ENCODE measurements at regions of chr13 and their contacts with region 1.

Region 1: DNA sequence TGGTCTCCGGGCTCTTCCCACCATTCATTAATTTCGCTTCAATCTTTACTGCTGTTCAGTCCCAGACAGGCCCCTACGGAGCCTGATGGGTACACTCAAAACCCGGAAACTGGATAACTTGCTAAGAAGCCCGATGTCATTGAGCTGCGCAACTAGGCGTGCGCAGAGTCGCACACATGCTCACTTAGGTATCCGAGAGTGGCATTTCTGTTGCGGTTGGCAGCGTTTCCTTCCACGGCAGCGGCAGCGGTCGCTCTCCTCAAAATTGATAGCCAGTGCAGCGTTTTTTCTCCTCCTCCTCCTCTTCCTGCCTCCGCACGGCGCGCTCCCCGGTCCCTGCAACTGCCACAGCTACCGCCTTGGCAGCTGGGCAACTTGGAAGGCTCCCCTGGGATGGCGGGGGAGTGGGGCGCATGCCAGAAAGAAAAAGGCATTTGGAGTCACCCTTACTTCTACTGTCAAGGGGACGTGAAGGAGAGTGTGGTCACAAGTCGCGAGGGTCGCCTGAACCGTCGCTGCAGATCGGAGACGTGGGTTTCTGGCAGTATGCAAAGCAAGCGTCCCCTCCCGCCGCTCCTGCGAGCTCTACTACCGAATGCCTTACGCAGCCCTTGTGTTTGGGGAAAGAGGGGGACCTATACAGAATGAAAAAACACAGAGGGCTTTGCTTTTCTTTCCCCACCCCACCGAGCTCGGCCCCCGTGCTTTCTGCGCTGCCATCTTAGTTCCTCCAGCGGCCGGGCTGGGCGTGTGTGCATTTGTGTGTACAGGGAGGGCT is 2.4 kb upstream of the MYCBP2 start:
- DNase-seq: peak; percentile 79
- ATAC-seq: peak; percentile 65
- H3K4me3 Mint-ChIP-seq: peak overlapping the region; percentile 98
- H3K27ac Mint-ChIP-seq: peak overlapping the region; percentile 98
- H3K4me1 Mint-ChIP-seq: peaks cover 53% of the 10 kb centered on the region
- H3K27me3 Mint-ChIP-seq: no peaks in the 10 kb centered on the region
- CTCF ChIP-seq: no peak

Region 2: DNA sequence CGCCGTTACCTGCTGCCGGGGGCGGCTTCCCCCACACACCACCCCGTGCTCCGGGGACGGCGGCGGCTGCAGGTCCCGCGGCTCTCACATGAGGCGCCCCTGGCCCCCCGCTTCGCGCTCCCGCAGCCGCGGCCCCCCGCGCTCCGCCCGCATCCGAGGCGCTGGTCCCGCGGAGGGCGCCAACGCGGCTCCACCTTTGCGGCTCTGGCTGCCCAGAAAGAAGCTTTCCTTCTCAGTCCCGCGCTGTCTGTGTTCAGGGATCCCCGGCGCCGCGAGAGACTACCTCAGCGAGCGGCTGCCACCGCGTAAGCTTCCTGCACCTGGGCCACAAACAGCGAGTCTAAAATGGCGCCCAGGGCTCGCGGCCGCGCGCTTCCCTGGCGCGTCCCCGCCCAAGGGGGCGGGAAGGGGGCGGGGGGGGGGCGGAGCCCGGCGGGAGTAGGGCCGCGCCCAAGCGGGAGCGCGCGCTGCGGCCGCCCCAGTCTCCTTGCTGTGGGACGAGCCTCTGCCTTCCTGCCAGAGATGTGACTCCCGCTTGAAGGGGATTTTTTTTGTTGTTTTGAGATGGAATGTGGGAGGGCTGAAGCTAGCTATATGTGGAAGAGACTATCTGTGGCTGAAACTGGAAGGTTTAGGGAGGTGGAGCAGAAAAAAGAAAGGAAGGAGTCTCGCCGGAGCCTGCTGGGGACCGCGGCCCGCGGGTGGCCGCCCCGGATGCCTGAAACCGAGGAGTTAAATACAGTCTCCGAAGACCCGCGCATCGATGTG is 302.3 kb before region 1 on chr13 and contains the start of gene FBXL3:
- CTCF ChIA-PET with region 1: no interaction called
- POLR2A ChIA-PET with region 1: interaction called, 12 read pairs
- intact Hi-C with region 1: loop called (anchors 2 kb)
- DNase-seq: peak; percentile 73
- ATAC-seq: peak; percentile 59
- H3K4me3 Mint-ChIP-seq: peak within 1 kb of the TSS; percentile 98
- H3K27ac Mint-ChIP-seq: peak within 1 kb of the TSS; percentile 96
- H3K4me1 Mint-ChIP-seq: peaks cover 54% of the 10 kb centered on the region
- H3K27me3 Mint-ChIP-seq: no peaks in the 10 kb centered on the region
- CTCF ChIP-seq: no peak
- total RNA-seq, gene FBXL3: 46.2 and 49.8 TPM in 2 replicates

Region 3: DNA sequence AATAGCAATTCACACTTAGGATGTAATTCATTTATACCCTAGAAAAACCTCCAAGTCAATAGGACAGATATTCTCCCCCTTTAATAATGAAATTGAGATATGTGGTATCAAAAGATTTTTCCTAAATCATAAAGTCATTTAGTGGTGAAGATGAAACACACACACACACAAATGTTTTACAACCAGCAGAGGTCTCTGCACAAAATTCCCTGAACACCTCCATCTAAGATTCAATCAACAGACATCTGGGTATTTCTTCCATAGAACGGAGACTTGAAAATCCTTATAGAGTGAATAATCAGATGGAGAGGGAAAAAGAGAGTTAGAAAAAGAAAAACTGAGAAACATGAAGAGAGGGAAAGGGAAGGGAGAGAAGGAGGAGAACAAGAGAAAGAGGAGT is 55.2 kb before region 1 on chr13:
- CTCF ChIA-PET with region 1: interaction called, 5 read pairs
- POLR2A ChIA-PET with region 1: interaction called, 3 read pairs
- intact Hi-C with region 1: loop called (anchors 2 kb)
- DNase-seq: no peak
- ATAC-seq: no peak
- H3K4me3 Mint-ChIP-seq: no peak overlapping the region
- H3K27ac Mint-ChIP-seq: peak overlapping the region; percentile 59
- H3K4me1 Mint-ChIP-seq: peaks cover 20% of the 10 kb centered on the region
- H3K27me3 Mint-ChIP-seq: no peaks in the 10 kb centered on the region
- CTCF ChIP-seq: no peak

Region 4: DNA sequence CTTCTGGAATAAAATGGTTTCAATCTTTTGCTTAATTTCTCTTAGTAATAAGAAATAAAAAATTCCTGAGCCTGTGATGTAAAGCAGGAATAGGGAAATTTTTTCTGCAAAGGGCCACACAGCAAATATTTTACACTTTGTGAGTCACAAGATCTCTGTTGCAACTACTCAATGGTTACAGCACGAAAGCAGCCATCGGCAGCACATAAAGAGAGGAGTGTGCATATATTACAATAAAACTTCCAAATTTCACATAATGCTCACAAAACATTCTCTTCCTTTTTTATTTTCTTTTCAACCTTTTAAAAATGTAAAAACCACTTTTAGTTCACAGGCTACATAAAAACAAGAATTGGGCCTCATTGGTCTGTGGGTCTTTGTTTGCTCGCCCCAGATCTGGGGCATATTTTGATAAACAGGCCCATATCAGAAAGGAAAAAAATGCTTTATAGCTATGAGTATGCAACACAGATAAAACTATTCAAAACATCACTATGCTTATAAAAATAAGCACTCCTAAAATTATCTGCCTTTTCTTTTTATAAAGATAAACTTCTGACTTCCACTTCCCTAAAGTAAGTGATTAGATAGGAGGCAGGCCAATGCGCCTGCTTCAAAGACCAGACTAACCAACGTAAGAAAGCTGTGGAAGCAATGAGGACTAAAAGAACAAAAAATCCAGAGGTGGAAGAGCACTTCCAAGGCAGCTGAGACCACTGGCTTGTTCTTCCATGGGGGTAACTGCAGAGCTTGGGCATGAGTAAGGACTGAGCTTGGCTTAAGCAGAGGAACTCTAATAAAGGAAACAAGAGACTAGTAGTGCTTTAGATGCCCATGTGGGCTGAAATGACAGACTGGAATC is 28.9 kb before region 1 on chr13:
- CTCF ChIA-PET with region 1: interaction called, 6 read pairs
- POLR2A ChIA-PET with region 1: interaction called, 43 read pairs
- intact Hi-C with region 1: loop called (anchors 1 kb)
- DNase-seq: no peak
- ATAC-seq: peak; percentile 46
- H3K4me3 Mint-ChIP-seq: peak overlapping the region; percentile 57
- H3K27ac Mint-ChIP-seq: peak overlapping the region; percentile 87
- H3K4me1 Mint-ChIP-seq: peaks cover 84% of the 10 kb centered on the region
- H3K27me3 Mint-ChIP-seq: no peaks in the 10 kb centered on the region
- CTCF ChIP-seq: no peak

Region 5: GRCh38 chr13:77345150-77345780 is 15.9 kb after region 1 on chr13:
- CTCF ChIA-PET with region 1: interaction called, 3 read pairs
- POLR2A ChIA-PET with region 1: interaction called, 272 read pairs
- intact Hi-C with region 1: loop called (anchors 1 kb)
- DNase-seq: no peak
- ATAC-seq: peak; percentile 77
- H3K4me3 Mint-ChIP-seq: peak overlapping the region; percentile 21
- H3K27ac Mint-ChIP-seq: peak overlapping the region; percentile 86
- H3K4me1 Mint-ChIP-seq: peaks cover 55% of the 10 kb centered on the region
- H3K27me3 Mint-ChIP-seq: no peaks in the 10 kb centered on the region
- CTCF ChIP-seq: no peak

Region 6: GRCh38 chr13:77415253-77416071 is 86.1 kb after region 1 on chr13:
- CTCF ChIA-PET with region 1: no interaction called
- POLR2A ChIA-PET with region 1: interaction called, 24 read pairs
- intact Hi-C with region 1: loop called (anchors 1 kb)
- DNase-seq: no peak
- ATAC-seq: peak; percentile 86
- H3K4me3 Mint-ChIP-seq: peak overlapping the region; percentile 11
- H3K27ac Mint-ChIP-seq: peak overlapping the region; percentile 89
- H3K4me1 Mint-ChIP-seq: peaks cover 35% of the 10 kb centered on the region
- H3K27me3 Mint-ChIP-seq: no peaks in the 10 kb centered on the region
- CTCF ChIP-seq: no peak

Measured in activated B cell treated with CpG ODN at 0.5 μM for 24 hours (primary cell).